Activated CD4-positive, alpha-beta memory T cell treated with anti-CD3 and anti-CD28 coated beads for 36 hours (primary cell): ENCODE measurements at regions of chr11 and their contacts with region 1.

Region 1: GRCh38 chr11:67353317-67354074 is at the start of gene POLD4:
- DNase-seq: peak; percentile 98
- H3K4me3 Mint-ChIP-seq: peak within 1 kb of the TSS; percentile 93
- H3K27ac Mint-ChIP-seq: peak within 1 kb of the TSS; percentile 98
- H3K4me1 Mint-ChIP-seq: peaks cover 44% of the 10 kb centered on the region
- H3K27me3 Mint-ChIP-seq: no peaks in the 10 kb centered on the region
- total RNA-seq, gene POLD4: 62.0 to 67.4 TPM

Region 2: GRCh38 chr11:67265633-67266423 is 87.7 kb before region 1 on chr11:
- CTCF ChIA-PET with region 1: interaction called, 39 read pairs
- POLR2A ChIA-PET with region 1: interaction called, 4 read pairs
- intact Hi-C with region 1: no loop called
- DNase-seq: peak; percentile 84
- H3K4me3 Mint-ChIP-seq: peak overlapping the region; percentile 63
- H3K27ac Mint-ChIP-seq: peak overlapping the region; percentile 80
- H3K4me1 Mint-ChIP-seq: peaks cover 72% of the 10 kb centered on the region
- H3K27me3 Mint-ChIP-seq: no peaks in the 10 kb centered on the region

Region 3: GRCh38 chr11:67366961-67367760 is 13.7 kb after region 1 on chr11:
- CTCF ChIA-PET with region 1: interaction called, 995 read pairs
- POLR2A ChIA-PET with region 1: interaction called, 9 read pairs
- intact Hi-C with region 1: loop called (anchors 2 kb)
- DNase-seq: no peak
- H3K4me3 Mint-ChIP-seq: no peak overlapping the region
- H3K27ac Mint-ChIP-seq: no peak overlapping the region
- H3K4me1 Mint-ChIP-seq: peaks cover 61% of the 10 kb centered on the region
- H3K27me3 Mint-ChIP-seq: peaks cover 4% of the 10 kb centered on the region

Region 4: GRCh38 chr11:67391304-67392132 is 38.0 kb after region 1 on chr11 and contains the start of gene RAD9A:
- CTCF ChIA-PET with region 1: interaction called, 995 read pairs
- POLR2A ChIA-PET with region 1: no interaction called
- intact Hi-C with region 1: no loop called
- DNase-seq: peak; percentile 95
- H3K4me3 Mint-ChIP-seq: peak within 1 kb of the TSS; percentile 92
- H3K27ac Mint-ChIP-seq: peak within 1 kb of the TSS; percentile 76
- H3K4me1 Mint-ChIP-seq: peaks cover 33% of the 10 kb centered on the region
- H3K27me3 Mint-ChIP-seq: no peaks in the 10 kb centered on the region
- total RNA-seq, gene RAD9A: 31.0 to 39.1 TPM

Region 5: GRCh38 chr11:67482825-67483798 is 129.6 kb after region 1 on chr11 and contains the start of gene AIP:
- CTCF ChIA-PET with region 1: interaction called, 4 read pairs
- POLR2A ChIA-PET with region 1: no interaction called
- intact Hi-C with region 1: loop called (anchors 1 kb)
- DNase-seq: peak; percentile 99
- H3K4me3 Mint-ChIP-seq: peak within 1 kb of the TSS; percentile 90
- H3K27ac Mint-ChIP-seq: peak within 1 kb of the TSS; percentile 99
- H3K4me1 Mint-ChIP-seq: peaks cover 42% of the 10 kb centered on the region
- H3K27me3 Mint-ChIP-seq: no peaks in the 10 kb centered on the region
- total RNA-seq, gene AIP: 160 to 169 TPM